CD8-positive, alpha-beta T cell (primary cell): ENCODE measurements at regions of chr12 and their contacts with region 1.

Region 1: DNA sequence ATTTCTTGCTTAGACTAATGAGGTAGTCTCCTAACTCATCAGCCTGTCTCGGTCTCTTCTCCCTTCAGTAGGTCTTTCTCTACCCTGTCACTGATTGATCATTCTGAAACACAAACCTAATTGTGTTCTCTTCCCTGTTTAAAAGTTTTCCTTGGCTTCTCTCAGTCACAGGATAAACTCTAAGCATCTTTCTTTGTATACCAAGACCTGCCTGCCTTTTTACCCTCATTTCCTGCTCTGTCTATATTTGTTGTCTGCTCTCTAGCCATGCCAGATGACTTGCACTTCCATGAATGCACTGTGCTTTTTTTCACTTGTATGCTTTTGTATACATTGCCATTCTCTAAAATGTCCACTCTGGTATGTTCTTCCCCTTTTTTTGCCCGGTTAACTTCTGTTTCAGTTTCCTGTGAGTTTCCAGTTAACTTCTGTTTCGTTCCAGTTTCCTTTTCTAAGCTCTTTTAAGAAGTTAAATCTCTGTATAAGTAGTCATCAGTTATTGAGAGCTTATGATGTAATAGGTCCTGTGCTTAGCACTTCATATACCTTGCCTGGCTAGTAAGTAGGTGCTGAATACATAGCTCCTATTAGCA is 12.8 kb downstream of the DIP2B start:
- DNase-seq: peak in 1 of 9 experiments; percentile 47
- ATAC-seq: peak; percentile 77
- H3K4me3 ChIP-seq: no peak overlapping the region
- H3K4me3 Mint-ChIP-seq: no peak overlapping the region
- H3K27ac ChIP-seq: peak overlapping the region; percentile 7 to 23
- H3K27ac Mint-ChIP-seq: no peak overlapping the region
- H3K4me1 ChIP-seq: peaks cover 84% of the 10 kb centered on the region
- H3K4me1 Mint-ChIP-seq: peaks cover 70% of the 10 kb centered on the region
- H3K27me3 ChIP-seq: no peaks in the 10 kb centered on the region
- H3K27me3 Mint-ChIP-seq: no peaks in the 10 kb centered on the region
- CTCF ChIP-seq: no peak

Region 2: DNA sequence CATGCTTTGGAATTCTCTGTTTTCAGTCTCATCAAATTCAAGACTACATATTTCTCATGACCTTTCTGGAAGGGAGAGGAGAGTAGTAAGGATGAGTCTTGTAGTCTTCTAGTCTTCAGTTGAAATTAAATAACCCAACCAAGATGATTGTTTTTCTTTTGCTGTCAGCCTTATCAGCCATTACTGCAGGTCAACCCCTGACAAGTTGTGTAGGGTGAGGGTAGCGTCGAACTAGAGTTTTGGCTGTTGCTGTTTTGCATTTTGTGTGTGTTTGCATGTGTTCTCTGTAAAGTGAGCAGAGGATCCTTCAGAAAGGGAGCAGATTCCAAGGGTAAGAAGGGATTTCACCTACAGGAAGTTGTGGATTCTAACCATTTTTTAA is 15.6 kb after region 1 on chr12:
- CTCF ChIA-PET with region 1: interaction called, 3 read pairs
- POLR2A ChIA-PET with region 1: interaction called, 5 read pairs
- intact Hi-C with region 1: loop called in 1 of 2 experiments (anchors 2 kb)
- DNase-seq: peak in 1 of 9 experiments; percentile 20
- ATAC-seq: peak; percentile 17
- H3K4me3 ChIP-seq: no peak overlapping the region
- H3K4me3 Mint-ChIP-seq: no peak overlapping the region
- H3K27ac ChIP-seq: peak overlapping the region; percentile 19 to 72
- H3K27ac Mint-ChIP-seq: no peak overlapping the region
- H3K4me1 ChIP-seq: peaks cover 30% of the 10 kb centered on the region
- H3K4me1 Mint-ChIP-seq: peaks cover 39% of the 10 kb centered on the region
- H3K27me3 ChIP-seq: no peaks in the 10 kb centered on the region
- H3K27me3 Mint-ChIP-seq: no peaks in the 10 kb centered on the region
- CTCF ChIP-seq: no peak